ENCODE measurements at regions of chr7 and their contacts with region 1.

Region 1: GRCh38 chr7:107879400-107880035 is 11.5 kb upstream of the DLD start:
- DNase-seq: no peak
- H3K4me3 ChIP-seq: no peak overlapping the region
- H3K27ac ChIP-seq: no peak overlapping the region
- H3K4me1 ChIP-seq: 0 out of 7 replicates have a peak, but pooled peaks cover 0 to 3% (median 0%) of the 10 kb centered on the region in 4 experiments
- H3K27me3 ChIP-seq: no peaks in the 10 kb centered on the region
- CTCF ChIP-seq: peak in 2 of 3 experiments; percentile 62 to 69; a peak in 3 of 4 replicates
- EP300 ChIP-seq: no peak
- POLR2A ChIP-seq: no peak
- RAD21 ChIP-seq: peak; percentile 76 to 80

Region 2: GRCh38 chr7:107743567-107744344 is 135.8 kb before region 1 on chr7 and contains the start of gene CBLL1:
- CTCF ChIA-PET with region 1: interaction called, 11 read pairs
- POLR2A ChIA-PET with region 1: interaction called, 6 read pairs
- DNase-seq: peak; percentile 78 to 94
- H3K4me3 ChIP-seq: peak within 1 kb of the TSS; percentile 88 to 100 (median 96)
- H3K27ac ChIP-seq: peak within 1 kb of the TSS; percentile 94
- H3K4me1 ChIP-seq: peaks cover 0 to 8% (median 2%) of the 10 kb centered on the region in 4 experiments; a peak in 3 of 7 replicates
- H3K27me3 ChIP-seq: no peaks in the 10 kb centered on the region
- CTCF ChIP-seq: peak; percentile 28 to 48 (median 41)
- EP300 ChIP-seq: no peak; a peak in 1 of 3 replicates
- POLR2A ChIP-seq: peak in 1 of 2 experiments; percentile 61; a peak in 1 of 3 replicates
- RAD21 ChIP-seq: peak; percentile 21 to 33
- total RNA-seq, gene CBLL1: 31.9 and 34.0 TPM in 2 replicates

Region 3: DNA sequence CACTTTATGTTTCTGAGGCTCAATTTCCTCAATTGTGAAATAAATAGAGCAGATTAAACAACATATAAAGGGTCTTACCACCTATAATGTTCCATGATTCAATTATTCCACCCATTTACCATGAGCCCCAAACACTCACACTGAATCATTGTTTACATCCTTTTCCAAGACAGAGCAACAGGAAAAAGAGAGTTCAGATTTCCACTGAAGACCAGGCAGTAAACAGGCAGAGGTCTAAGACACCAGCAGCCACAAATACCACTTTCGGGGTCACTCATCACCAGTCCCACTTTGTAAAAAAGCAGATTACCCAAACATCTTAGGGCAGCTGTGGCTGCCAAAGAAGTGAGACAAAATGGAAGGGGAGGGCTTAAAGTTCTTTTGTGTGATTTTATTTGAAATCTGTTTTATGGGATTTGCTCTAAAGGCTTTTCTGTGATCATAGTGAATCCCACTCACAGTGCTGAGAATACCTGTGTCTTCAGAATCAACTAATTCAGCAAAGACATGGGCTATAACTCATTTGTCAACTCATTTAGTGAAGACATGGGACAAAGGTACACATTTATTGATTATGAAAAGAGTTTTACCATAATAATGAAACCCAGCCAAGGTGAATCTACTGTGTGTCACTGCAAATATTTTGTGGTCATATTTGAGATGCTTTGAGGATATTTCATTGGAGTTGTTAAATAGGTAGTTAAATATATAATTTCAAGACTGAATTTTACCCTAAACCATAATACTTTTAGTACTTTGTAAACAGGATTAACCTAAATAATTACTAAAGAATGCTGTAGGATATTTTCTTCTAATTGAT is 13.4 kb before region 1 on chr7:
- CTCF ChIA-PET with region 1: interaction called, 14 read pairs
- POLR2A ChIA-PET with region 1: no interaction called
- DNase-seq: no peak
- H3K4me3 ChIP-seq: no peak overlapping the region
- H3K27ac ChIP-seq: no peak overlapping the region
- H3K4me1 ChIP-seq: no peaks in the 10 kb centered on the region
- H3K27me3 ChIP-seq: no peaks in the 10 kb centered on the region
- CTCF ChIP-seq: no peak
- EP300 ChIP-seq: no peak
- POLR2A ChIP-seq: no peak
- RAD21 ChIP-seq: no peak

Region 4: DNA sequence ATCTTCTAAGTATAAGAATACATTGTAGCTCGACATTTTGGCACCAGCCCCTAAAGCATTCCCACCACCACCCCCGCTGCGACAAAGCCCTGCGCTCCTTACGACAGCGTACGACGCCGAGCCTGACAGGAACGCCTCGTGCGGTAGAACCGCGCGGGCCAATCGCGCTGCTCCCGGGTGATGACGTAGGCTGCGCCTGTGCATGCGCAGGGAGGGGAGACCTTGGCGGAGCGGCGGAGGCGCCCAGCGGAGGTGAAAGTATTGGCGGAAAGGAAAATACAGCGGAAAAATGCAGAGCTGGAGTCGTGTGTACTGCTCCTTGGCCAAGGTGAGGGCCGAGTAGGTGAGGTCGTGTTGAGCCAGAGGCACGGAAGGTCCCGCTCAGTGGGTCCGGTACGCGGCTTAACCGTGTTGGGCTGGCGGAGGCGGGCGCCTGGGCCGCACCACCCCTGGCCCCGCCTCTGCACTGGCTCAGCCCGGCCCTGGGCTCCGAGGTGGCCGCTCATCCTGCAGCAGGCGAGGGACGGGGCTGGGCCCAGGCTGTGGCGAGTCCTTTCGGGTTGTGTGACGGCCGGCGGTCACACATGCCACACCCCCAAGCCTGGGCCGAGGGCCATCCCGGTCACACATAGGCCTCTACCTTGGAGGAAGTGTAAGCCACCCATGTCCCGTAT is 11.6 kb after region 1 on chr7 and contains the start of gene DLD:
- CTCF ChIA-PET with region 1: interaction called, 31 read pairs
- POLR2A ChIA-PET with region 1: interaction called, 3 read pairs
- DNase-seq: peak; percentile 67 to 95
- H3K4me3 ChIP-seq: peak within 1 kb of the TSS; percentile 67 to 88 (median 75)
- H3K27ac ChIP-seq: peak within 1 kb of the TSS; percentile 85
- H3K4me1 ChIP-seq: peaks cover 0 to 6% (median 3%) of the 10 kb centered on the region in 4 experiments; a peak in 1 of 7 replicates
- H3K27me3 ChIP-seq: no peaks in the 10 kb centered on the region
- CTCF ChIP-seq: no peak
- EP300 ChIP-seq: no peak
- POLR2A ChIP-seq: peak in 1 of 2 experiments; percentile 75; a peak in 2 of 3 replicates
- RAD21 ChIP-seq: no peak
- total RNA-seq, gene DLD: 63.7 and 71.4 TPM in 2 replicates

Measured in H1 (cell line).